ENCODE measurements at regions of chr7 and their contacts with region 1.

Region 1: DNA sequence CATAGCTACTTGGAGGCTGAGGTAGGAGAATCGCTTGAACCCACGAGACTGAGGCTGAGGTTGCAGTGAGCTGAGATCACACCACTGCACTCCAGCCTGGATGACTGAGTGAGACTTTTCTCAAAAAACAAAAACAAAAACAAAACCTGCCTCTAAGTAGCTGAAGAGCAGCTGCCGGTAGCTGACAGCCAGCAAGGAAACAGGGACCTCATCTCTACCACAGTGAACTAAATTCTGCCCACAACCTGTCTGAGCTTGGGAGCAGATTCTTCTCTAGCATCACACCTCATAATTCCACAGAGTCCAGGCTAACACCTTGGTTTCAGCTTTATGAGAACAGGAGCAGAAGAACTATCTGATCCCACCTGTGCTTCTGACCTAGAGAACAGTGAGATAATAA is 246.2 kb downstream of the KCND2 start:
- DNase-seq: no peak
- CTCF ChIP-seq: no peak

Region 2: DNA sequence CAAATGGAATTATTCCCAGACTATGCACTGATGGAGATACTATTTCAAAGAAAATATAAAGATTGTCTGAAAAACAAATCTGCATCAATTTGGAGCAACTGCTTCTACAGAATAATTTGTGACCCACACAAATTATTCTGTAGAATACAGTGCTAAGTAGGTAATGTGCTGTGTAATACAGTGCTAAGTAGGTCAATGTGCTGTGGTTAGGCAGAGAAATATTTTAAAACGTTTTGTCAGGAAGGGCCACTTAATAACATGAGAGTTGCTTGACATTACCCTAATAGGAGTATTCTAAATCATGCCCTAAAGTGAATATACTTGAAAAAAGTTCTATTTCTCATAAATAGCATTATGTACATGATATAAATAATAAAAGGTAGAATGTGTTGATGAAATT is 362.7 kb before region 1 on chr7:
- CTCF ChIA-PET with region 1: no interaction called
- POLR2A ChIA-PET with region 1: no interaction called
- DNase-seq: no peak
- CTCF ChIP-seq: no peak

Region 3: GRCh38 chr7:120504386-120504785 is 14.8 kb before region 1 on chr7:
- CTCF ChIA-PET with region 1: interaction called, 10 read pairs
- POLR2A ChIA-PET with region 1: no interaction called
- DNase-seq: no peak
- CTCF ChIP-seq: no peak